ENCODE measurements at regions of chr20 and their contacts with region 1.

Region 1: DNA sequence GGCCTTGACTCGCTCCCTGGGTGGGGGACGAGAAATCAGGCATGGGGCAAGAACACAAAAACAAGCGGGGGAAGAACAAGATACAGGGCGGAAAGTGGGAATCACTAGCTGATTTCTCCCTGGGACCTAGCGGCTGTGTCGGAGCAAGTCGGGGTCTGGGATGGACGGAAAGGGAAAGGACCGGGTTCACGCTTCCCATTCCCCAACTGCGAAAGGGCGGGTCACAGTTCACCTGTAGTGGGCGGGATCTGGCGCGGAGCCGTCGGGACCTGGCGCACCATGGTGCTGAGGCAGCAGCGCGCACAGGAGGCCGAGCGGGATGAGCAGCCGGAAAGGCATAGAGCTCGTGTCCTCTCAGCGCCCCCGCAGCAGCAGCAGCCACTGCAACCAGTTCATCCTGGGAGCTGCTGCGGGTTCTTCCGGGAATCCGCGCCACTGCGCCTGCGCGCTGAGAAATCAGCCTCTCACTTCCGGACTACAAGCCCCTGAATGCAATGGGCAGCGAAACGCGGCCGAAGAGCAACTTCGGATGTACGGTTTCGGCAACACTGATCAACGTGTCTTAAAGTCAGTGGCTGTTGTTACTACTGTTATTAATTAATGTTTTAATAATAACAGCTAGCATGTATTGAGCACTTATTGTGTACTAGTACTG is at the start of gene EDEM2:
- DNase-seq: peak; percentile 93
- H3K4me3 Mint-ChIP-seq: peak within 1 kb of the TSS; percentile 93
- H3K27ac Mint-ChIP-seq: peak within 1 kb of the TSS; percentile 94
- H3K4me1 Mint-ChIP-seq: peaks cover 41% of the 10 kb centered on the region
- H3K27me3 Mint-ChIP-seq: peaks cover 9% of the 10 kb centered on the region
- total RNA-seq, gene EDEM2: 19.9 and 21.9 TPM in 2 replicates

Region 2: DNA sequence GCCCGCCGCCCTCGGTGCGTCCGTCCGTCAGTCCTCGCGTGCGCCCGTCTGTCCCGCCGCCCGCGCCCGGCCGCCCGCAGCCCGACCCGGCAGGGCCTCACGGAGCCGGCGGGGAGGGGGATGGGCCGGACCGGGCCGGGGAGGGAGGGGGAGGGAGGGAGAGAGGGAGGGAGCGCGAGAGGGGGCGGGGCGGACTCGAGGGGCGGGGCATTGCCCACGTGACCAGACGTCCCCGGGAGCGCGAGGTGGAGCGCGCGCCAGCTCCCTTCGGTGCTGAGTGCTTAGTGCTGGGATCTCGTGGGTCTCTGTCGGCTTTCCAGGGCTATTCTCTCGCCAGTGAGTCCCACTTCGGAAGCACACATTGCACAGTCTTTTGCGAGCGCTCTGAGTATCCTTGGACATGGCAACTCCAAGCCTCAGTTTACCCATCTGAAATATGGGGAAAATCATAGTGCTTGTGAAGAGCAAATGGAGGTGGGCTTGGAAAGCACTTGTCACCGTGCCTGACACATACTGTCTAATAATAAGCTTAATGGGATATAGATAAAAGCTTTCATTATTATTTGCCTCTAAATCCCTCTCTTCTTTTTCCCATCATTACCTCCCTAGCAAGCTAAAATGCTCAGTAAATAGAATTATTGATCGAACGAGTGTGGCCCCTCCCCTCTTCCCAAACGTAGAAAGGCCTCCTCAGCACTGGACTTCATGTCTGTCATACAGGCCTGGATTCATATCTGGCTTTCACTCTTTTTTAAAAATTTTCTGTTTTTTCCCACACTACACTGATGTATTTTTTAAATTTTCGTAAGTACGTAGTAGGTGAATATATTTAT is 321.3 kb before region 1 on chr20 and contains the start of gene NCOA6:
- intact Hi-C with region 1: loop called (anchors 5 kb)
- DNase-seq: peak; percentile 68
- H3K4me3 Mint-ChIP-seq: peak within 1 kb of the TSS; percentile 97
- H3K27ac Mint-ChIP-seq: peak within 1 kb of the TSS; percentile 91
- H3K4me1 Mint-ChIP-seq: peaks cover 30% of the 10 kb centered on the region
- H3K27me3 Mint-ChIP-seq: peaks cover 13% of the 10 kb centered on the region
- total RNA-seq, gene NCOA6: 25.5 and 29.1 TPM in 2 replicates

Region 3: GRCh38 chr20:35092524-35093266 is 54.4 kb before region 1 on chr20 and contains the start of gene TRPC4AP:
- intact Hi-C with region 1: loop called (anchors 1 kb)
- DNase-seq: peak; percentile 88
- H3K4me3 Mint-ChIP-seq: peak within 1 kb of the TSS; percentile 92
- H3K27ac Mint-ChIP-seq: peak within 1 kb of the TSS; percentile 94
- H3K4me1 Mint-ChIP-seq: peaks cover 48% of the 10 kb centered on the region
- H3K27me3 Mint-ChIP-seq: no peaks in the 10 kb centered on the region
- total RNA-seq, gene TRPC4AP: 53.9 and 54.0 TPM in 2 replicates

Region 4: DNA sequence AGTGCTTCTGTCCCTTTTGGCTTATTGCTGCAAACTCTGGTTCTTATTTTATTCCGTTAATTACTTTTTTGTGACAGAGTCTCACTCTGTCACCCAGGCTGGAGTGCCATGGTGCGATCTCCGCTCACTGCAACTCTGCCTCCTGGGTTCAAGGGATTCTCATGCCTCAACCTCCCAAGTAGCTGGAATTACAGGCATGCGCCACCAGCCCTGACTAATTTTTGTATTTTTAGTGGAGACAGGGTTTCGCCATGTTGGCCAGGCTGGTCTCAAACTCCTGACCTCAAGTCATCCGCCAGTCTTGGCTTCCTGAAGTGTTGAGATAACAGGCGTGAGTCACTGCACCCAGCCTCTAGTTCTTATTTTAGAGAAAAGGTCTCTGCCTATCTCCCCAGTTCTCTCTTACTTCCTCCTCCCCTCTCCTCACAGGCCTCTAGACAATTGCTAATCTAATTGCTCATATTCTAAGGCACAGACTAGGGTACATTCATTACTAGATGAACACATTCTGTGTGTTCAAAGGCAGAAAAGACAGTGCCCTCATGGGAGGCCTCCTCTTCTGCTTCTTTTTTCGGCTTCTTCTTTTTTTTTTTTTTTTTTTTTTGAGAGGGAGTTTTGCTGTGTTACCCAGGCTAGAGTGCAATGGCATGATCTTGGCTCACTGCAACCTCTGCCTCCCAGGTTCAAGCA is 26.9 kb before region 1 on chr20:
- intact Hi-C with region 1: no loop called
- DNase-seq: no peak
- H3K4me3 Mint-ChIP-seq: no peak overlapping the region
- H3K27ac Mint-ChIP-seq: no peak overlapping the region
- H3K4me1 Mint-ChIP-seq: peaks cover 7% of the 10 kb centered on the region
- H3K27me3 Mint-ChIP-seq: no peaks in the 10 kb centered on the region

Region 5: GRCh38 chr20:35277531-35278395 is 130.7 kb after region 1 on chr20 and contains the start of gene MMP24OS:
- intact Hi-C with region 1: loop called (anchors 2 kb)
- DNase-seq: peak; percentile 88
- H3K4me3 Mint-ChIP-seq: peak within 1 kb of the TSS; percentile 98
- H3K27ac Mint-ChIP-seq: peak within 1 kb of the TSS; percentile 99
- H3K4me1 Mint-ChIP-seq: peaks cover 18% of the 10 kb centered on the region
- H3K27me3 Mint-ChIP-seq: no peaks in the 10 kb centered on the region
- total RNA-seq, gene MMP24OS: 25.0 and 27.0 TPM in 2 replicates

Region 6: DNA sequence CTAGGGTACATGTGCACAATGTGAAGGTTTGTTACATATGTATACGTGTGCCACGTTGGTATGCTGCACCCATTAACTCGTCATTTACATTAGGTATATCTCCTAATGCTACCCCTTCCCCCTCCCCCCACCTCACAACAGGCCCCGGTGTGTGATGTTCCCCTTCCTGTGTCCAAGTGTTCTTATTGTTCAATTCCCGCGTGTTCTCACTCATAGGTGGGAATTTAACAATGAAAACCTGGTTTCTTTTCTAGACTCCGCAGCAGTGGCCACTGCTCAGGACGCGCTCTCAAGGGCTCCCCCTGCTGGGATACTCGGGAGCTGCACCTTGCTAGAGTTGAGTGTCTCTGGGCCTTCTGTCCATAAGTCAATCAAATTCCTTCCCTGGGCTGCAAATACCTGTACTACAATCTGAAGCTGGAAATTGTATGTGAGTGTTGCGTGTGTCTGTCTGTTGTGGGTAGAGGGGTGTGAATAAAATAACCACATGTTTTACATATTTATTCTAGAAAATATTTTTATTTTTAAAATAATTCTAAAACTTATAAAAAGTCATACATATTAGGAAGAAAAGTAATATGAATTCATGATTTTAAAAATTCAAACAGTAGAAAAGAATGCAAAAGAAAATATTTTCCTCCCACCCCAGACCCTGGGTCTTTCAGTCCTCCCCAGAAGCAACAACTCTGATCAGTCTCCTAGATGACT is 300.2 kb after region 1 on chr20:
- intact Hi-C with region 1: loop called (anchors 1 kb)
- DNase-seq: peak; percentile 84
- H3K4me3 Mint-ChIP-seq: peak overlapping the region; percentile 89
- H3K27ac Mint-ChIP-seq: peak overlapping the region; percentile 72
- H3K4me1 Mint-ChIP-seq: peaks cover 4% of the 10 kb centered on the region
- H3K27me3 Mint-ChIP-seq: peaks cover 11% of the 10 kb centered on the region